Activated CD4-positive, alpha-beta T cell treated with anti-CD3 and anti-CD28 coated beads, Interleukin-2, amount 10 ng/mL, durations not matched to agents 24 days and 14 days (primary cell): ENCODE measurements at regions of chr14 and their contacts with region 1.

Region 1: DNA sequence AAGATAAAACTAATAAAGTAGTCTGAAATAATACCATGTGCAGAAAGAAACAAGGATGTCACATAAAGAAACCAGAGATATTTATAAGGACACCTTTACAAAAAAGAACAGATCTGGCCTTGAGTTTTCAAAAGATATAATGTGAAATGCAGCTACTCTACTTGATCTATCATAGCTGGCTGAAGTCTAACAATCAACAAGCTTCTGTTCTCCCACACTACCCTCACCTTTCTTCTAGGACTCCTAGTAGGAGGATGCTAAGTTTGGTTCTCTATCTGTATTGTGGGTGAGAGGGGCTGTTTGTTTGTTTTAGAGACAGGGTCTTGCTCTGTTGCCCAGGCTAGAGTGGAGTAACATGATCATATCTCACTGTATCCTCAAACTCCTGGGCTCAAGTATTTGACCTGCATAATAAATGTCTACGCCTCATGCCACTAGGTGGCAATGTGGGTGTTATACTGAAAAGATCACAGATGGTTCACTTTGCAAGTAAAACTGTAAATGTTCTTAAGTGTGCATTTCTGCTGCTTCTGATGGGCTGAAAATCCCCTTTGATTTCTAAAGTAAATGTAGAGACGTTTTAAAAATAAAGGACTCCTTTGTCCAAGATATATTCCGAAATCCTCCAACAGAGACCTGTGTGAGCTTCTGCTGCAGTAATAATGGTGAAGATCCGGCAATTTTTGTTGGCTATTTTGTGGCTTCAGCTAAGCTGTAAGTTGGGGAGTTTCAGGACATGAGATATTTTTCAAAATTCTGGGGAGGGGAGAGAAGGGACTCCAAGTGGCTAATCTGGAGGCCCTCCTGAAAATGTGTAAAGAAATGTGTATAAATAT is 269.3 kb downstream of the DAD1 start:
- DNase-seq: peak; percentile 65
- H3K4me3 Mint-ChIP-seq: peak overlapping the region; percentile 76
- H3K27ac Mint-ChIP-seq: peak overlapping the region; percentile 76
- H3K4me1 Mint-ChIP-seq: no peaks in the 10 kb centered on the region
- H3K27me3 Mint-ChIP-seq: no peaks in the 10 kb centered on the region

Region 2: GRCh38 chr14:22383515-22384166 is 63.9 kb after region 1 on chr14:
- intact Hi-C with region 1: loop called (anchors 5 kb)
- DNase-seq: no peak
- H3K4me3 Mint-ChIP-seq: peak overlapping the region; percentile 3
- H3K27ac Mint-ChIP-seq: peak overlapping the region; percentile 75
- H3K4me1 Mint-ChIP-seq: no peaks in the 10 kb centered on the region
- H3K27me3 Mint-ChIP-seq: no peaks in the 10 kb centered on the region

Region 3: GRCh38 chr14:22478670-22479069 is 158.9 kb after region 1 on chr14:
- intact Hi-C with region 1: loop called (anchors 5 kb)
- DNase-seq: no peak
- H3K4me3 Mint-ChIP-seq: peak overlapping the region; percentile 87
- H3K27ac Mint-ChIP-seq: peak overlapping the region; percentile 84
- H3K4me1 Mint-ChIP-seq: no peaks in the 10 kb centered on the region
- H3K27me3 Mint-ChIP-seq: no peaks in the 10 kb centered on the region